ENCODE measurements at regions of chr20 and their contacts with region 1.

Region 1: DNA sequence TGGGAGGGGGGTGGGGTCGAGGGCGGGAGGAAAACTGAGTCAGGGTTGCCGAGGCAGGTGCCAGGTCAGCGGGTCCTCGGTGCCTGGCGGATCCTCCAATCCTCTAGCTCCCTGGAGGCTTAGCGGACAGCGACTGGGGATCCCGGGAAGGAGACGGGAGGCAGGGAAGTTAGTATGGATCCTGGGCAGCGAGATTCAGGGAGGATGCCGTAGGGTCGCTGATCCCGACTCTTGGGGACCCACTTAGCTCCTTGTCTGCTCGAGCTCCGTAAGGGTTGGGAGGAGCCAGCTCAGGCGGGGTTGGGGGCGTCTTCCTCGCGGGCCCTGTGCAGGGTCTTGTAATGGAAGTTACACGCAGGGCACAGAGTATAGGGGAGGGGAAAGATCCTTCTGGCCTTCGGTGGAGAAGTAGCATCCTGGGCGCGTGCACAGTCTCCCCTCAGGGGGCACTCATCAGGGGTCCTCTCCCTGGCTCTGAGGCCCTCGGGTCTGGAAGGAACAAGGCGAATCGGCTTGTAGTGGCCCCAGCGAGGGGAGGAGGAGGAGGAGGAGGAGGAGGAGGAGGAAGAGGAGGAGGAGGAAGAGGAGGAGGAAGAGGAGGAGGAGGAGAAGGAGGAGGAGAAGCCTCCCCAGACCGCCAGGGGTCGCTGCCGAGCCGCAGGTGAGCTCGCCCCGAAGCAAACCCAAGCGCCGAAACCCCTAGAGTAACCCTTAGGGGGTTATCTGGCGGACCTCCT is 6.4 kb upstream of the SLC12A5 start:
- DNase-seq: peak; percentile 51 to 56
- ATAC-seq: peak; percentile 62 to 79
- H3K4me3 ChIP-seq: peak overlapping the region; percentile 60
- H3K27ac ChIP-seq: peak overlapping the region in 1 of 2 experiments; percentile 88; a peak in 3 of 6 replicates
- H3K4me1 ChIP-seq: no peaks in the 10 kb centered on the region
- CTCF ChIP-seq: peak; percentile 85
- EP300 ChIP-seq: no peak
- POLR2A ChIP-seq: no peak
- RAD21 ChIP-seq: peak; percentile 77 to 84

Region 2: GRCh38 chr20:46034039-46034438 is 11.5 kb after region 1 on chr20:
- CTCF ChIA-PET with region 1: interaction called, 15 read pairs
- POLR2A ChIA-PET with region 1: no interaction called
- DNase-seq: no peak
- ATAC-seq: no peak
- H3K4me3 ChIP-seq: no peak overlapping the region
- H3K27ac ChIP-seq: no peak overlapping the region
- H3K4me1 ChIP-seq: no peaks in the 10 kb centered on the region
- CTCF ChIP-seq: no peak
- EP300 ChIP-seq: no peak
- POLR2A ChIP-seq: no peak
- RAD21 ChIP-seq: no peak

Region 3: DNA sequence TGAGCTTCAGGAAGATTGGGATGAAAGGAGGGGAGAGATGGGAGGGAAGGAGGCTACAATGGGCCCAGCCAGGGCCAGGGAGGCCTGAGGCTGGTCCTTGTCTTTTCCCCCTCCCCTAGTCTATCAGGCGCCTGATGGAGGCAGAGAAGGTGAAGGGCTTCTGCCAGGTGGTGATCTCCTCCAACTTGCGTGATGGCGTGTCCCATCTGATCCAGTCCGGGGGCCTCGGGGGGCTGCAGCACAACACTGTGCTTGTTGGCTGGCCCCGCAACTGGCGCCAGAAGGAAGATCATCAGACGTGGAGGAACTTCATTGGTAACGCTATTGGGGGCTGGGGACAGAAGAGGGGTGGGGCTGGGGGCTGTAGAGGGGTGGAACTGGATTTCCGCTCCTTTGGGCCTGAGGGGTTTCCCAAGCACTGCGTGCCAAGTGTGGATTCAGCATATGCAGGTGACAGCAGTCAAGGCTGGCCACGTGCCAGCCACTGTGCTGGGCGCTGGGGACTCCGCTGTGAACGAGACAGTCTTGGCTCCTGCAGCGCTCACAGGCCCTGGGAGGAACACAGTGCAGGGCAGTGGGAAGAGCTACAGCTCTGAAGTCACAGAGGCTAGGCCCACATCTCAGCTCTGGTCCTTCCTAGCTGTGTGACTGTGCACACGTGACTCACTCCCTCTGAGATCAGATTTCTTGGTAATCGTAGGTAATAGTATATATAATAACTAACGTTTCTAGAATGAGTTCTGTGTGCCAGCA is 29.2 kb after region 1 on chr20:
- CTCF ChIA-PET with region 1: interaction called, 10 read pairs
- POLR2A ChIA-PET with region 1: no interaction called
- DNase-seq: peak in 1 of 2 experiments; percentile 35
- ATAC-seq: peak; percentile 76 to 77
- H3K4me3 ChIP-seq: no peak overlapping the region
- H3K27ac ChIP-seq: no peak overlapping the region
- H3K4me1 ChIP-seq: peaks cover 8% of the 10 kb centered on the region; the same call in 2 of the 3 replicates
- CTCF ChIP-seq: no peak
- EP300 ChIP-seq: no peak
- POLR2A ChIP-seq: no peak
- RAD21 ChIP-seq: no peak

Region 4: GRCh38 chr20:46089417-46090388 is 67.1 kb after region 1 on chr20 and contains the start of gene NCOA5:
- CTCF ChIA-PET with region 1: interaction called, 29 read pairs
- POLR2A ChIA-PET with region 1: interaction called, 3 read pairs
- DNase-seq: peak; percentile 91 to 98
- ATAC-seq: peak; percentile 92 to 93
- H3K4me3 ChIP-seq: peak within 1 kb of the TSS; percentile 70
- H3K27ac ChIP-seq: peak within 1 kb of the TSS; percentile 97 to 98
- H3K4me1 ChIP-seq: peaks cover 38% of the 10 kb centered on the region
- CTCF ChIP-seq: peak; percentile 39; the same call in 1 of the 3 replicates
- EP300 ChIP-seq: no peak
- POLR2A ChIP-seq: peak; percentile 79
- RAD21 ChIP-seq: peak; percentile 23 to 41; a peak in 1 of 5 replicates
- polyA plus RNA-seq, gene NCOA5: 22.2 and 28.0 TPM in 2 replicates

Measured in A549 (cell line).